Adrenal gland (tissue), 19 donors: ENCODE measurements at regions of chr10 and their contacts with region 1.

Region 1: DNA sequence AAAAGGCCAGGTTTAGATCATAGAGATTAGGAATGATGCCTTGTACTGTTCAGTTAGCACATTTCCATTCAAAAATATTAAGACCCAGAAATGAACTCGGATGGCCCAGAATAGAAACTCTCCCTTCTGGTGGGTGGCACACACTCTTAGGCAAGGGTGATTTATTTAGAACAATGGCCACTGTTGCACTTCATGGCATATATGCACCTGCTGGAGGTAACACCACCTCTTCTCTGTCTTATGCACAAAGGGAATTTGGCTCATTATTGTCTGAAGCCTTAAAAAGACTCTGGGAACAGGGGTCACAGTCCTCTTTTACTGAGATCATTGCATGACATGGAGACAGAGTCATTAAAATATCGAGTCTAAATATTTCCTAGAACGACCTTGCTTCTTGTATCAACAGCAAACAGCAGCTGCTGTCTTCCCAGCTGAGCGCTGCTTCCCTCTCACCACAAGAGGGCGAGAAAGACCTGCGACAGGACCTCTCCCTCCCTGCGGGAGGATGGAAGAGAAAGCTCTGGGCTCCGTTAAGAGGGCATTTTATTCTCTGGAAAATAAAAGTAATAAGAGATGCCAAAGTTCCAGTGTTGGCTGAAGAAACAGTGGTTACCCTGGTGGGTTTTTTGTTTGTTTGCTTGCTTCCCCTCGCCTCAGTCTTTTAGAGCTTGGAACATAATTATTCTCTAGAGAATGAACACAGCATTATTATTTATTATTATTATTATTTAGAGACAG is 13.6 kb upstream of the BAMBI start:
- DNase-seq: peak; percentile 84 to 94 (median 87)
- H3K4me3 ChIP-seq: no peak overlapping the region
- H3K27ac ChIP-seq: no peak overlapping the region
- H3K4me1 ChIP-seq: peaks cover 0 to 3% of the 10 kb centered on the region in 2 donors
- H3K27me3 ChIP-seq: no peaks in the 10 kb centered on the region
- CTCF ChIP-seq: peak; percentile 92 to 98 (median 96)
- POLR2A ChIP-seq: no peak

Region 2: GRCh38 chr10:28503114-28503513 is 160.6 kb before region 1 on chr10:
- intact Hi-C with region 1: no loop called
- DNase-seq: no peak
- H3K4me3 ChIP-seq: no peak overlapping the region
- H3K27ac ChIP-seq: no peak overlapping the region
- H3K4me1 ChIP-seq: no peaks in the 10 kb centered on the region
- H3K27me3 ChIP-seq: no peaks in the 10 kb centered on the region
- CTCF ChIP-seq: no peak
- POLR2A ChIP-seq: no peak

Region 3: DNA sequence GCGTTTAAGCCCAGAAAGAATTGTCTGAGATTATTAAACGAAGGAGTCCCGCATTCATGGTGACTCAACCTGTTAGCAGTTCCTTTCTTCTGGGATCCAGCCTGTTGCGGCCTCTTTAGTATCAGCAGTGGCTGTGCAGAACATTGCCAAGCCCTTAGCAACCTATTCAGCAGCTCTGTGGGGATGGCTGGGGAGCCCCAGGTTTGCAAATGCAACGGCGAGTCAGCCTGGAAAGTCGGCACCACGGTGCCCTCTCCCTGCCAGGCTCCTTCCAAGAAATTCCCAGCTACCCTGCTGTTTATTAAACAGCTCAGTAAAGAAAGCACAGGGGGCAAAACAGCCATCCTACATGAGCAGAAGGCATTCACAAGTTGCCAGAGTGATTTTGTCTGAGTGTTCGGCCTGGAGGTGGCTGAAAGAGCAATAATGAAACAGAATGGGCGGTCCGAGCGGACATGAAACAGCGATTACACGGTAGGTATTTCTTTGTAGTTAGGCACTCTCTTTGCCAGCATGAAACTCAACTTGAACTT is 211.9 kb after region 1 on chr10:
- intact Hi-C with region 1: loop called in 1 of 2 experiments (anchors 5 kb)
- DNase-seq: peak in 3 of 7 donors; percentile 15 to 30 (median 18)
- H3K4me3 ChIP-seq: no peak overlapping the region
- H3K27ac ChIP-seq: no peak overlapping the region
- H3K4me1 ChIP-seq: peaks cover 10 to 20% of the 10 kb centered on the region in 2 donors
- H3K27me3 ChIP-seq: no peaks in the 10 kb centered on the region
- CTCF ChIP-seq: no peak
- POLR2A ChIP-seq: no peak

Region 4: GRCh38 chr10:28991326-28992270 is 327.9 kb after region 1 on chr10:
- intact Hi-C with region 1: loop called in 1 of 2 experiments (anchors 5 kb)
- DNase-seq: peak in 6 of 7 donors; percentile 38 to 65 (median 44)
- H3K4me3 ChIP-seq: no peak overlapping the region
- H3K27ac ChIP-seq: no peak overlapping the region
- H3K4me1 ChIP-seq: no peaks in the 10 kb centered on the region
- H3K27me3 ChIP-seq: no peaks in the 10 kb centered on the region
- CTCF ChIP-seq: peak; percentile 75 to 89 (median 78)
- POLR2A ChIP-seq: no peak

Region 5: GRCh38 chr10:29131952-29132820 is 468.4 kb after region 1 on chr10:
- intact Hi-C with region 1: loop called (anchors 5 to 10 kb)
- DNase-seq: no peak
- H3K4me3 ChIP-seq: no peak overlapping the region
- H3K27ac ChIP-seq: no peak overlapping the region
- H3K4me1 ChIP-seq: no peaks in the 10 kb centered on the region
- H3K27me3 ChIP-seq: no peaks in the 10 kb centered on the region
- CTCF ChIP-seq: no peak
- POLR2A ChIP-seq: no peak

Region 6: GRCh38 chr10:29304264-29305030 is 640.7 kb after region 1 on chr10:
- intact Hi-C with region 1: loop called (anchors 5 to 10 kb)
- DNase-seq: peak; percentile 44 to 84 (median 57)
- H3K4me3 ChIP-seq: no peak overlapping the region
- H3K27ac ChIP-seq: no peak overlapping the region
- H3K4me1 ChIP-seq: no peaks in the 10 kb centered on the region
- H3K27me3 ChIP-seq: no peaks in the 10 kb centered on the region
- CTCF ChIP-seq: peak; percentile 64 to 86 (median 82)
- POLR2A ChIP-seq: no peak